OCI-LY7 (cell line): ENCODE measurements at regions of chr13 and their contacts with region 1.

Region 1: DNA sequence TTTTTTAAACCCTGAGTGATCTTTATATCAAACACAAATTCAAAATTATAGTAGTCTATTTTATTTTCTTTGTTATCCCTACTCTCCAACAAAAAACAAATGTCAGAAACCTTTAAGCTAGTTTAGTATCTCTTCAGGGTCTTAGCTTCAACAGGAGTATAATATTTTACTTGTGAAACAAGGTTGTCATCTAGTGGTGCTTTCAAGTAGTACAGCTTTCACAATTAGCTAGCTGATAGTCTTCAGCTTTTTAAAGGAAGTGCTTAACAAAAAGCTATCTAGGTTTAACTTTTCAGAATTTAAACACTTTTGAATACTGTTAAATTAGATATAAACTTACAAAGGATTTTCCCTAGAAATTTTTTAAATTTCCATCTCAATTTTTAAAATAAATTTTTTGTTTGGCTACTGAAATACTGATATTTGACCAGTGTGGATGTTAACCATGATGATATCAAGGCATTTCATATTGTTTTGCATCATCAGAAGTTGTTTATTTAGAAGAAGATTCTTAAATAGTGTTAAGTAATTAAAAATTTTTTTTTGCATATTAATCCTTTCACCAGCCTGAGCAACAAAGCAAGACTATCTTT is 34.2 kb downstream of the TDRD3 start:
- DNase-seq: peak; percentile 63
- H3K4me3 ChIP-seq: no peak overlapping the region
- H3K27ac ChIP-seq: no peak overlapping the region
- H3K4me1 ChIP-seq: no peaks in the 10 kb centered on the region
- CTCF ChIP-seq: peak; percentile 97

Region 2: GRCh38 chr13:59391696-59392095 is 1039.5 kb before region 1 on chr13:
- CTCF ChIA-PET with region 1: interaction called, 4 read pairs
- POLR2A ChIA-PET with region 1: no interaction called
- intact Hi-C with region 1: loop called (anchors 2 kb)
- DNase-seq: peak; percentile 83
- H3K4me3 ChIP-seq: no peak overlapping the region
- H3K27ac ChIP-seq: no peak overlapping the region
- H3K4me1 ChIP-seq: peaks cover 4% of the 10 kb centered on the region
- CTCF ChIP-seq: peak; percentile 93

Region 3: DNA sequence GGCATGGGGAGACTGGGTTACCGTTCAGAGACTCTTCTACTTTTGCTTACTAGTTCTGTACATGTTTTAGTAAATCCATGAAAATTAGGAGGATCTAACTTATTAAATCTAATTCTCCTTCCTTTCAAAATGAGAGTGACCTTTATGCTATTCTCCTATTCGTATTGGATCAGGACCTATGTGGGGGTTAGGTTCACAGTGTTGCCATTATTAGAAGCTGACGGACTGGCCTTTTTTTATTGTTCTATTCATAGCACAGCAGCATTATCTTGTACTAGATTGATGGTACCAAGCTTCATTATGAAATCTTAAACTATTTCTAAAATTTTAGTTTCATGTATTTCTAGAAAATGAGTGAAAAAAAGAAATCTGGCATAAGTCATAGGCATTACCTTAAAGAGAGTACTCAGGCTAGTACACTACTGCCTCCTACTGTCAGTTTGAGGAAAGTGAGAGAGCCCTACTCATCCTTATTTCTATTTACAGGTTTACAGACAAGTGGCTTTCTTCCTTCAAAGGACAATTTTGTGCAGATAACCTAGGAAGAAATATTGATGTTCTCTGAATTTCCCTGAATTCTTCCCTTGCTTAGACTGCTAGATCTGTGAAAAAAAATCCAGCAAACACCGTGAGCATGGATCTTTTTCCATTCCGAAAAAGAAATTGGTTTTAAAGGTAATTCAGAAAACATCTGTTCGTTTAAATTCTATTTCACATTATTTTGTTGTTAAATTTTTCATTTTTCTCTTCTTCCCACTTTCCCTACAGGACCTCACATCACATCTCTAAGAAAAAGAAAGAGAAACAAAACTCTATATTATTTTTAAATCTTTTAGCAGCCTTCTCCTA is 753.0 kb before region 1 on chr13:
- CTCF ChIA-PET with region 1: no interaction called
- POLR2A ChIA-PET with region 1: no interaction called
- intact Hi-C with region 1: loop called (anchors 5 kb)
- DNase-seq: peak; percentile 22
- H3K4me3 ChIP-seq: no peak overlapping the region
- H3K27ac ChIP-seq: no peak overlapping the region
- H3K4me1 ChIP-seq: no peaks in the 10 kb centered on the region
- CTCF ChIP-seq: peak; percentile 78

Region 4: GRCh38 chr13:60329221-60329983 is 101.8 kb before region 1 on chr13:
- CTCF ChIA-PET with region 1: no interaction called
- POLR2A ChIA-PET with region 1: interaction called, 3 read pairs
- intact Hi-C with region 1: loop called (anchors 1 kb)
- DNase-seq: peak; percentile 27
- H3K4me3 ChIP-seq: no peak overlapping the region
- H3K27ac ChIP-seq: no peak overlapping the region
- H3K4me1 ChIP-seq: no peaks in the 10 kb centered on the region
- CTCF ChIP-seq: peak; percentile 70

Region 5: DNA sequence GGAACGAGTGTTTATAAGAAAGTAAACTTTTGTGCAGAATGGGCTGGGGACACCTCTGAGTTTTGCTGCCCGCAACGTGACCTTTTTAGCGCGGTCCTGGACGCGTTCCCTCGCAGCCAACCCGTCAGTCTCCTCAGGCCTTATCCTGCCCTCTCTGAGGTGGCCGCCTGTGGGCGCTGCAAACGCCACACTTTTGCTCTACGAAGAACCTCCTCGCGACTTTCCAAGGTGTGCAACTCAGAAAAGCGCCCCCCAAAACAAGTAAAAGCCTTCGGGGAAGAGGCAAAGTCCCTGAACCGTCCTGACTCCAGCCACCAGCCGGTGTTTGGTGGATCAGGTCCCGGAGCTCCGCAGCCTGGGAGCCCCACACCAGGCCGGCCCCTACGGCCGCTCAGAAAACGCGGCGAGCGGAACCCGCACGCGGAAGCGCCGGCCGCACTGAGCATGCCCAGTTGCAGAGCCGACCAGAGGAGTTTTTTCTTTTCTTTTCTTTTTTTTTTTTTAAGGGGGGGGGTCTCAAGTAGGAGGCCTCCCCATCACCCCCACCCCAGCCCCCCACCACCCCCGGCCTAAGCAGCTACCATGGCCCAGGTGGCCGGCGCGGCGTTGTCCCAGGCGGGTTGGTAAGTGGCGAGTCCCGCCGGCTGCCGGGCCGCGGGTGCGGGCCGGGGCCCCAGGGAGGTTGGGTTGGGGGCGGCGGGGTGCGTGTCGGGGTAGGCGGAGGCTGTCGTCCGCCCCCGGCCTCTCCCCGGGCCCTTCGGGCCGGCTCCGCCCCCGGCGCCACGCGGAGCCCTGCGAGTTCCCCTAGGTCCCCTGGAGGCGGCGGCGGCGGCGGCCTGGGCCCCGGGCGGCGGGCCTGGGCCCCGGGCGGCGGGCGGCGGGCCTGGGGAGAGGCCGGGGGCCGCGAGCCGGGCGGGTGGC is 34.2 kb before region 1 on chr13 and contains the start of gene TDRD3:
- CTCF ChIA-PET with region 1: interaction called, 3 read pairs
- POLR2A ChIA-PET with region 1: interaction called, 3 read pairs
- intact Hi-C with region 1: loop called (anchors 2 kb)
- DNase-seq: peak; percentile 88
- H3K4me3 ChIP-seq: peak within 1 kb of the TSS; percentile 77
- H3K27ac ChIP-seq: peak within 1 kb of the TSS; percentile 82
- H3K4me1 ChIP-seq: peaks cover 24% of the 10 kb centered on the region
- CTCF ChIP-seq: peak; percentile 84
- total RNA-seq, gene TDRD3: 12.2 and 13.5 TPM in 2 replicates

Region 6: GRCh38 chr13:60494296-60494695 is 63.1 kb after region 1 on chr13:
- CTCF ChIA-PET with region 1: no interaction called
- POLR2A ChIA-PET with region 1: no interaction called
- intact Hi-C with region 1: no loop called
- DNase-seq: no peak
- H3K4me3 ChIP-seq: no peak overlapping the region
- H3K27ac ChIP-seq: no peak overlapping the region
- H3K4me1 ChIP-seq: no peaks in the 10 kb centered on the region
- CTCF ChIP-seq: no peak